ENCODE measurements at regions of chr5 and their contacts with region 1.

Region 1: GRCh38 chr5:32709781-32710549 is 1.2 kb upstream of the NPR3 start:
- DNase-seq: peak; percentile 79
- ATAC-seq: peak; percentile 57
- H3K4me3 ChIP-seq: peak overlapping the region; percentile 85
- H3K27ac ChIP-seq: peak overlapping the region; percentile 47
- H3K4me1 ChIP-seq: peaks cover 40% of the 10 kb centered on the region
- H3K27me3 ChIP-seq: peaks cover 16% of the 10 kb centered on the region
- CTCF ChIP-seq: peak; percentile 86

Region 2: DNA sequence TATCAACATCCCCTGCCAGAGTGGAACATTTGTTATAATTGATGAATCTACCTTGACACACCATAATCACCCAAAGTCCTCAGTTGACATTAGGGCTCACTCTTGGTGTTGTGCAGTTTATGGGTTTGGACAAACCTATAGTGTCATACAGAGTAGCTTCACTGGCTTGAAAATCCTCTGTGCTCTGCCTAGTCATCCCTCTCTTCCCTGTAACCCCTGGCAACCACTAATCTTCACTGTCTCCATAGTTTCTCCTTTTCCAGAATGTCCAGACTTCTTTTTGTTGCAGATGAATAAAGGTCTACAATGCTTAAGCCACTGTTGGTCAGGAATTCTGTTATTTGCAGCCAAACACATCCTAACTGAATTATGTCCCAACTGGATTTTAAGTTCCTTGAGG is 147.1 kb before region 1 on chr5:
- CTCF ChIA-PET with region 1: no interaction called
- POLR2A ChIA-PET with region 1: no interaction called
- intact Hi-C with region 1: no loop called
- DNase-seq: no peak
- ATAC-seq: no peak
- H3K4me3 ChIP-seq: no peak overlapping the region
- H3K27ac ChIP-seq: no peak overlapping the region
- H3K4me1 ChIP-seq: peaks cover 5% of the 10 kb centered on the region; the same call in 1 of the 2 replicates
- H3K27me3 ChIP-seq: no peaks in the 10 kb centered on the region
- CTCF ChIP-seq: no peak

Region 3: DNA sequence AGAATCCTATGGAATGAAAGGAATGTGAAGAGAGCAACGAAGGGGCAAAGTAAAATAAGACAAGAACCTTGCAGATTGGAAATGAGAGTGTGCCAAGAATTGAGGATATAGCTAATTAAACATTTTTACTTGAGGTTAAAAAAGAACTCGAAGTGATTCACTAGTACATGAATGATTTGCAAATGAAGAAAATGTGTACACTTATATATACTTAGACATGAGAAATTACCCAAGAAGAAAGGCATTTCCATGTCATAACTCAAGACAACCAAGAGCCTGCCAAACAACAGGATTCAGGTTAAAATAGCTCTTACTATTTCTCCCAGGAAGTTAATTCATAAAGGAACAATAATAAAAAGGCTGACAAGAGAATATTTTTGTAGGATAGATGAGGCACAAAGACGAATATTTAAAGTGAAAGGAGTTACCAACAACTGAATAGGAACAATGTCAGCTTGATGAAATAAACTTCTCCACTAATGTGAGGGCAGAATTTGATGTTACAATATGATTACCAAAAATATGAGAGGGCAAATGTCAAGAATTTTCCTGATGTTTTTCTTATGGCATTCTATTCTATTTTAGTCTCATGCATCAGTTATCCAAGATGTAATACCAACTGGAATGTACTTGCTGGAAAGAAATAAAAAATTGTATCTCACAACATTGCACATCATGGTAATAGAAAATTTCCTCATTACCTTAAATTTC is 17.8 kb before region 1 on chr5:
- CTCF ChIA-PET with region 1: no interaction called
- POLR2A ChIA-PET with region 1: no interaction called
- intact Hi-C with region 1: no loop called
- DNase-seq: no peak
- ATAC-seq: no peak
- H3K4me3 ChIP-seq: no peak overlapping the region
- H3K27ac ChIP-seq: no peak overlapping the region
- H3K4me1 ChIP-seq: no peaks in the 10 kb centered on the region
- H3K27me3 ChIP-seq: no peaks in the 10 kb centered on the region
- CTCF ChIP-seq: no peak

Region 4: DNA sequence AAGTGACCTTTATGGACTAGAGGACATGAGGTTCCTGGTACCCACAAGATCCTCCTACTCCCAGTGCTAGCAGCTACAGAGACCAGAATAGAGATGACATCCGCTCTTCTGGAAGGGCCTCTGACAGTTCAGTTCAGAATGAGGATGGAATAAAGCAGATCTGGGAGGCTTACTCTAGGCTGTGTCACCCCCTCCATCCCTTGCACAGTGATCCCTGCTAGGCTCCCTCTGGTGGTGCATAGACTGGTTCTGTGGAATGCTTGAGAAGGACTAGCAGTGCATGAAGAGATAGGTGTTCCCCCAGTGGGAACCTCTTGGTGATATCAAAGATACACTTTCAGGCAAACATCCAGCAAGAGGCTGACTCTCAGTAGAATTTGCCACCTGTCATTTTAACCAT is 84.1 kb after region 1 on chr5:
- CTCF ChIA-PET with region 1: no interaction called
- POLR2A ChIA-PET with region 1: no interaction called
- intact Hi-C with region 1: loop called (anchors 1 kb)
- DNase-seq: peak; percentile 59
- ATAC-seq: peak; percentile 81
- H3K4me3 ChIP-seq: no peak overlapping the region
- H3K27ac ChIP-seq: no peak overlapping the region
- H3K4me1 ChIP-seq: peaks cover 14% of the 10 kb centered on the region
- H3K27me3 ChIP-seq: no peaks in the 10 kb centered on the region
- CTCF ChIP-seq: peak; percentile 75

Region 5: DNA sequence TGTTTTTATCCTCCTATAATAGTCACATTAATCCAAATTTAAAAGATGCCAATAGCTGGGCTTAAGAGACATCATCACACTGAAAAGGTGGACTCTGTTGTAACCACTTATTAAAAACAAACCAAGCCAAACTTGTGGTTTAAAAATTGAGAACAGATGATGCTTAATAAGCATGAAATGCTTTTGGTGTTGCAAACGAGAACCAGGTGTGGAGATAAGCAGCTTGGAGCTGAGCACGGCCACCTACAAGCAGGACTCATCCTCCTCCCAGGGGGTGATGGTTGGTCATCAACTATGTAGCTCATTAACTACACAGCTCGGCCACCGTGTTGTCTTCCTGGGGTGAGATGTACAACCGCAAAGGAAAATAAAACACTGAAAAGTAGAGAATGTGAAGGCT is 155.5 kb after region 1 on chr5:
- CTCF ChIA-PET with region 1: interaction called, 4 read pairs
- POLR2A ChIA-PET with region 1: no interaction called
- intact Hi-C with region 1: loop called (anchors 2 kb)
- DNase-seq: no peak
- ATAC-seq: no peak
- H3K4me3 ChIP-seq: no peak overlapping the region
- H3K27ac ChIP-seq: no peak overlapping the region
- H3K4me1 ChIP-seq: peaks cover 44% of the 10 kb centered on the region
- H3K27me3 ChIP-seq: no peaks in the 10 kb centered on the region
- CTCF ChIP-seq: no peak

Region 6: GRCh38 chr5:33299621-33300208 is 589.8 kb after region 1 on chr5:
- CTCF ChIA-PET with region 1: interaction called, 4 read pairs
- POLR2A ChIA-PET with region 1: no interaction called
- intact Hi-C with region 1: loop called (anchors 2 kb)
- DNase-seq: peak; percentile 72
- ATAC-seq: peak; percentile 82
- H3K4me3 ChIP-seq: peak overlapping the region; percentile 21; the same call in 1 of the 2 replicates
- H3K27ac ChIP-seq: peak overlapping the region; percentile 47
- H3K4me1 ChIP-seq: peaks cover 21% of the 10 kb centered on the region
- H3K27me3 ChIP-seq: no peaks in the 10 kb centered on the region
- CTCF ChIP-seq: peak; percentile 86

Measured in PC-3 (cell line).